ENCODE measurements at regions of chr2 and their contacts with region 1.

Region 1: DNA sequence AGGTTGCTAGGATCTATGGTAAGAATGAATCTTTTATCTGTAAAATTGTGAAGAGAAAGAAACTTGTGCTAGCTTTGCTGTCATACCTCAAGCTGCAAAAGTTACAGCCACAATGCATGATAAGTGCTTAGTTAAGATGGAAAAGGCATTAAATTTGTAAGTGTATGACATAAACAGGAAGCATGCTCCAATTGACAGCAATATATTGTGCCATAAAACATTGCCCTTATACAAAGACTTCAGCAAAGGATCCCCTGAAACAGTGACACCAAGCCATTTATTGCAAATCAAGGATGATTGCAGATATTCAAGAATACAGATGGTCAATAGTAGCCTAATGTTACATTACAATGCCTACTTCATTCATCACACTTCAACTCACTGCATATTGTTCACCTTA is 283.1 kb downstream of the CPS1 start:
- DNase-seq: no peak
- H3K4me3 ChIP-seq: no peak overlapping the region
- H3K27ac ChIP-seq: no peak overlapping the region
- H3K4me1 ChIP-seq: no peaks in the 10 kb centered on the region
- H3K27me3 ChIP-seq: no peaks in the 10 kb centered on the region
- CTCF ChIP-seq: no peak

Region 2: DNA sequence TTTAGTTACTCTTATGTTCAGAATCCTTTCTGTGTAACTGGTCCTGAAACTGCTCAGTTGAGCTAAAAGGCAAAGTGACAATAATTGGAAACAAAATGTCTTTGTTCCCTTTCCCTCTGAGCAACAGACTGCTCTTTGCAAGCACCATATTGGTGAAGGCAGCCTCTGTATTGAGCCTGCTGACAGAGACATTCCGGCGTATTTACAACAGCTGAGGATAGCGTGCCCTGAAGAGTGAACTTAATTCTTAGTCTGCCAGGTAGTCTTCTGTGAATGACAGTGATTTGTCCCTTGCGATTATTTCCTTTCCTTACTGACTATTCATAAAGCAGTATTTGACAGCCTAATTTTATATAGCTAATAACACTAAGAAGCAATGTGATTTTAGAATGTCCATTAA is 43.9 kb before region 1 on chr2:
- CTCF ChIA-PET with region 1: no interaction called
- dilution Hi-C with region 1: no loop called
- in situ Hi-C with region 1: no loop called
- intact Hi-C with region 1: loop called (anchors 5 kb)
- DNase-seq: no peak
- H3K4me3 ChIP-seq: no peak overlapping the region
- H3K27ac ChIP-seq: no peak overlapping the region
- H3K4me1 ChIP-seq: no peaks in the 10 kb centered on the region
- H3K27me3 ChIP-seq: peaks cover 3% of the 10 kb centered on the region
- CTCF ChIP-seq: no peak

Measured in mammary epithelial cell (primary cell).